Activated CD4-positive, alpha-beta memory T cell treated with anti-CD3 and anti-CD28 coated beads for 36 hours (primary cell): ENCODE measurements at regions of chr14 and their contacts with region 1.

Region 1: GRCh38 chr14:93033983-93034670 is 81.6 kb downstream of the ITPK1 start:
- DNase-seq: peak; percentile 49
- H3K4me3 Mint-ChIP-seq: no peak overlapping the region
- H3K27ac Mint-ChIP-seq: no peak overlapping the region
- H3K4me1 Mint-ChIP-seq: peaks cover 22% of the 10 kb centered on the region
- H3K27me3 Mint-ChIP-seq: no peaks in the 10 kb centered on the region

Region 2: GRCh38 chr14:92866181-92866752 is 167.9 kb before region 1 on chr14:
- CTCF ChIA-PET with region 1: no interaction called
- POLR2A ChIA-PET with region 1: no interaction called
- intact Hi-C with region 1: no loop called
- DNase-seq: no peak
- H3K4me3 Mint-ChIP-seq: no peak overlapping the region
- H3K27ac Mint-ChIP-seq: no peak overlapping the region
- H3K4me1 Mint-ChIP-seq: no peaks in the 10 kb centered on the region
- H3K27me3 Mint-ChIP-seq: peaks cover 6% of the 10 kb centered on the region

Region 3: DNA sequence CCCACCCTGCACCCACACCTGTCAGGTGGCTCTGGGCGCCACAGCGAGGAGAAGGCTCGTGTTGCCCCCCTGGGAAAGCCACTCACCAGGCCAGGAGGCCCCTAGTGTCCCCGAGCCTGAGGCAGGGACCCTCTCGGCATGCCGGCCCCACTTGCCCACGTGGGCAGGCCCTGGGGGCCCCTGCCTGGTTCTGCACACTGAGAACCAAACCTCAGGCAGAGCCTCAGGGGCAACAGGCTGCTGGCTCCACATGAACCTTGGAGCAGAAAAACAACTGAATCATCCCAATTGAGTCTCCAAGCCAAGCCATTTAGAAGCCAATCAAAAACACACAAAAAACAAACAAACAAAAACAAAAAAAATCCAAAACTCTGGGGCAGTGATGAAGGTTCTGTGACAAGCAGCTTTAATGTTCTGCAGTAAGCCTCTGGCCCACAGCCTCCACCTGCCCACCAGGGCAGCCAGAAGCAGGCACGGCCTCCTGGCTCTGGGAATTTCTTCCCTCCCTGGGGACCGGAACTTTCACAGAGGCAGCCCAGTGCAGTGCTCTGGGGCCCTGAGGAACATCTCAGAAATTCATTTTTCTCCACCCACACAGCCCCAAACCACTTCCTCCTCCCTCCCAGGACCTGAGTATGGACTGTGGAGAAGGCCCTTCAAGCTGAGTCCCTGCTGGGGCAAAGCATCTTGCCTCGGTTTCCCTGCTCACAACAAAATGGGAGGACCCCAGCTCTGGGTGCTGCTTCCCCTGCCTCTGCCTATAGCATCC is 21.0 kb before region 1 on chr14:
- CTCF ChIA-PET with region 1: no interaction called
- POLR2A ChIA-PET with region 1: no interaction called
- intact Hi-C with region 1: no loop called
- DNase-seq: peak; percentile 14
- H3K4me3 Mint-ChIP-seq: no peak overlapping the region
- H3K27ac Mint-ChIP-seq: no peak overlapping the region
- H3K4me1 Mint-ChIP-seq: peaks cover 20% of the 10 kb centered on the region
- H3K27me3 Mint-ChIP-seq: no peaks in the 10 kb centered on the region

Region 4: GRCh38 chr14:93137864-93138263 is 103.7 kb after region 1 on chr14:
- CTCF ChIA-PET with region 1: interaction called, 4 read pairs
- POLR2A ChIA-PET with region 1: no interaction called
- intact Hi-C with region 1: loop called (anchors 1 kb)
- DNase-seq: no peak
- H3K4me3 Mint-ChIP-seq: no peak overlapping the region
- H3K27ac Mint-ChIP-seq: no peak overlapping the region
- H3K4me1 Mint-ChIP-seq: peaks cover 2% of the 10 kb centered on the region
- H3K27me3 Mint-ChIP-seq: no peaks in the 10 kb centered on the region